B cell (primary cell): ENCODE measurements at regions of chr16 and their contacts with region 1.

Region 1: GRCh38 chr16:68744369-68745280 is 7.5 kb downstream of the CDH1 start:
- DNase-seq: no peak
- ATAC-seq: no peak
- H3K4me3 ChIP-seq: no peak overlapping the region
- H3K4me3 Mint-ChIP-seq: no peak overlapping the region
- H3K27ac ChIP-seq: no peak overlapping the region
- H3K27ac Mint-ChIP-seq: no peak overlapping the region
- H3K4me1 ChIP-seq: peaks cover 16 to 18% of the 10 kb centered on the region in 2 donors
- H3K4me1 Mint-ChIP-seq: peaks cover 20% of the 10 kb centered on the region
- H3K27me3 ChIP-seq: no peaks in the 10 kb centered on the region
- H3K27me3 Mint-ChIP-seq: peaks cover 16% of the 10 kb centered on the region
- CTCF ChIP-seq: no peak

Region 2: DNA sequence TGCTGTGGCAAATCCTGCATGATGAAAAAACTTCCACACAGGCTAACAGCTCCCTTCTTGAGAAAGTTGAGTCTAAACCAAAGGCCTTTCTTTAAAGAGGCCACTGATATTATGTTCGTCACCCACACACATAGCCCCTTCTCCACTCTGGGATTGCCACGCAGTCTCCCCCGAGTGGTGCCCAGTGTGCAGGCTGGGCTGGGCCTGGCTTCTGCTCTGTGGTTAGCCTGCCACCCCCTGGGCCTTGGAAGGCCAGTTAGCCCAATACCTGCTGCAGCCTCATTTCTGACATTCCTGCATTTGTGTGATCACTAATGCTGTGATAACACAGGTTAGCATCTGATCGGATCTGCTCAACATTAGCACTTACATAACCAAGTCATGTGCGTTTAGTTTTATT is 54.7 kb before region 1 on chr16:
- CTCF ChIA-PET with region 1: no interaction called
- POLR2A ChIA-PET with region 1: no interaction called
- intact Hi-C with region 1: no loop called
- DNase-seq: no peak
- ATAC-seq: no peak
- H3K4me3 ChIP-seq: no peak overlapping the region
- H3K4me3 Mint-ChIP-seq: no peak overlapping the region
- H3K27ac ChIP-seq: no peak overlapping the region
- H3K27ac Mint-ChIP-seq: no peak overlapping the region
- H3K4me1 ChIP-seq: no peaks in the 10 kb centered on the region
- H3K4me1 Mint-ChIP-seq: no peaks in the 10 kb centered on the region
- H3K27me3 ChIP-seq: no peaks in the 10 kb centered on the region
- H3K27me3 Mint-ChIP-seq: peaks cover 5% of the 10 kb centered on the region
- CTCF ChIP-seq: no peak

Region 3: GRCh38 chr16:68756250-68756915 is 11.8 kb after region 1 on chr16:
- CTCF ChIA-PET with region 1: no interaction called
- POLR2A ChIA-PET with region 1: interaction called, 3 read pairs
- intact Hi-C with region 1: loop called (anchors 1 kb)
- DNase-seq: peak; percentile 43
- ATAC-seq: peak; percentile 80
- H3K4me3 ChIP-seq: no peak overlapping the region
- H3K4me3 Mint-ChIP-seq: peak overlapping the region; percentile 69
- H3K27ac ChIP-seq: peak overlapping the region; percentile 50 to 69
- H3K27ac Mint-ChIP-seq: peak overlapping the region; percentile 99
- H3K4me1 ChIP-seq: peaks cover 5 to 22% of the 10 kb centered on the region in 2 donors
- H3K4me1 Mint-ChIP-seq: peaks cover 37% of the 10 kb centered on the region
- H3K27me3 ChIP-seq: peaks cover 0 to 4% (median 1%) of the 10 kb centered on the region in 4 experiments
- H3K27me3 Mint-ChIP-seq: peaks cover 2% of the 10 kb centered on the region
- CTCF ChIP-seq: no peak

Region 4: DNA sequence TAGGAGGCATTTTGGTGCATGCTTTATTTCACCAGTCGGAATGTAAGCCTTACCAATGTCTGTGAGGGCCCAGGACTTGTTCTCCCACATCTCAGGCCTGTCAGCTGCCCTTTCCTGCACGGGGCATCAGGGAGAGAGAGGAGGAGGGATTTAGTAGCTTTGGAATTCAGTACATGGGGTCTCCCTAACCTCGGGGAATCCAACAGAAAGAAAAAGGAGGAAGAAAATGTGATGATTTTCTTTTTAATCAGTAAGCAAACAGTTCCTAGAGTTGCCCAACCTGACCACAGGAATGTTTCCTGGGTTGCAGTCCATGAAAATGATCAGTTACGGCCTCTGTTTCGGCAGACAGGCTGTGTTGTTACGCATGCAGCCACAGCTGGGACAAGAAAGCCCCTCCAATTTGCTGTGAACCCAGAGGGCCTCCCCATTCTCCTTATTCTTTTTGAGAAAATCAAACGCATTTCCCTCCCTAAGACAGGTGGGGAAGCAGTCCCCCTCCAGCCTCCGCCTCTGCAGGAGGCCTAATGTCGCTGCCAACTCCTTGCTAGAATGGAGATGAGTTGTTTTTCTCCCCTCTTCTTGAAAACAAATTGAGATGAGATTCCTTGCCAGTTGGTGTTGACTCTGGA is 45.6 kb after region 1 on chr16:
- CTCF ChIA-PET with region 1: no interaction called
- POLR2A ChIA-PET with region 1: no interaction called
- intact Hi-C with region 1: loop called (anchors 10 kb)
- DNase-seq: no peak
- ATAC-seq: no peak
- H3K4me3 ChIP-seq: no peak overlapping the region
- H3K4me3 Mint-ChIP-seq: no peak overlapping the region
- H3K27ac ChIP-seq: no peak overlapping the region
- H3K27ac Mint-ChIP-seq: no peak overlapping the region
- H3K4me1 ChIP-seq: no peaks in the 10 kb centered on the region
- H3K4me1 Mint-ChIP-seq: no peaks in the 10 kb centered on the region
- H3K27me3 ChIP-seq: peaks cover 0 to 5% (median 0%) of the 10 kb centered on the region in 4 experiments
- H3K27me3 Mint-ChIP-seq: peaks cover 4% of the 10 kb centered on the region
- CTCF ChIP-seq: no peak

Region 5: DNA sequence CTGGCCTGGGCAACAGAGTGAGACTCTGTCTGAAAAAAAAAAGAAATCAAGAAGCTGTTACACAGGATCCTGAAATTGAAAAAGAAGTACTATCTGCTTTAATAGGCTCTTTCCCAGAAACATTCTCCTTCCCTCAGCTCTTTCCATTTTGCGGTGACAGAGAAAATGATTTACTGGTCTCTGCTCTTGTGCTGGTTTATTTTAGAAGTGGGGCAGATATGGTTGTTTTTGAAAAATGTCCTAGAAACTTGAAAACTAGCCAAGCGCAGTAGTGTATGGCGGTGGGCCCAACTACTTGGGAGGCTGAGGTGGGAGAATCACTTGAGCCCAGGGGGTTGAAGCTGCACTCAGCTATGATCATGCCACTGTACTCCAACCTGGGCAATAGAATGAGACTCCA is 69.9 kb after region 1 on chr16:
- CTCF ChIA-PET with region 1: no interaction called
- POLR2A ChIA-PET with region 1: no interaction called
- intact Hi-C with region 1: no loop called
- DNase-seq: no peak
- ATAC-seq: no peak
- H3K4me3 ChIP-seq: no peak overlapping the region
- H3K4me3 Mint-ChIP-seq: no peak overlapping the region
- H3K27ac ChIP-seq: no peak overlapping the region
- H3K27ac Mint-ChIP-seq: no peak overlapping the region
- H3K4me1 ChIP-seq: no peaks in the 10 kb centered on the region
- H3K4me1 Mint-ChIP-seq: no peaks in the 10 kb centered on the region
- H3K27me3 ChIP-seq: no peaks in the 10 kb centered on the region
- H3K27me3 Mint-ChIP-seq: peaks cover 17% of the 10 kb centered on the region
- CTCF ChIP-seq: no peak

Region 6: GRCh38 chr16:69404275-69404805 is 659.7 kb after region 1 on chr16:
- CTCF ChIA-PET with region 1: no interaction called
- POLR2A ChIA-PET with region 1: no interaction called
- intact Hi-C with region 1: no loop called
- DNase-seq: no peak
- ATAC-seq: no peak
- H3K4me3 ChIP-seq: no peak overlapping the region
- H3K4me3 Mint-ChIP-seq: no peak overlapping the region
- H3K27ac ChIP-seq: no peak overlapping the region
- H3K27ac Mint-ChIP-seq: no peak overlapping the region
- H3K4me1 ChIP-seq: peaks cover 5 to 7% of the 10 kb centered on the region in 2 donors
- H3K4me1 Mint-ChIP-seq: peaks cover 6% of the 10 kb centered on the region
- H3K27me3 ChIP-seq: peaks cover 0 to 3% (median 0%) of the 10 kb centered on the region in 4 experiments
- H3K27me3 Mint-ChIP-seq: no peaks in the 10 kb centered on the region
- CTCF ChIP-seq: no peak